KBM-7 (cell line): ENCODE measurements at regions of chr1 and their contacts with region 1.

Region 1: GRCh38 chr1:158998781-158999161 is 10.9 kb upstream of the IFI16 start:
- DNase-seq: peak; percentile 87

Region 2: DNA sequence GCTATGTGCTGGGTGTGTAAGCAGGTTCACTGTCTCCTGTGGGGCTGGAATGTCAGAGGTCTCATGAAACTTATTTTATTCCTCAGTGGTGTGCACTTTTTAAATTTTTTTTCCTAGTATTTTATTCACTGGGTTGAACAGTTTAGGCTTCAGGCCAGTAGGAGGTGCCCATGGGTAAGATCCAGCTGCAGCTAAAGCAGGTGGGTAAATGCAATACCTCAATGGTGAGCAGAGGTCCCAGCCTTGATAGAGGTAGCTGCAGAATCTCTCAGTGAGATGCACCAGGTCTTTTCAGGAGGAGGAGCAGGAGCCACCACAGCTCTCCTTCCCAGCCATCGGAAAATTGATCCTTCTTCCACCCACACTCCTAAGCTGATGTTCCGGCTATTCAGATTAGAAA is 205.2 kb before region 1 on chr1:
- in situ Hi-C with region 1: loop called (anchors 25 kb)
- DNase-seq: no peak

Region 3: GRCh38 chr1:159339536-159339935 is 340.8 kb after region 1 on chr1:
- in situ Hi-C with region 1: no loop called
- DNase-seq: no peak